ENCODE measurements at regions of chr17 and their contacts with region 1.

Region 1: DNA sequence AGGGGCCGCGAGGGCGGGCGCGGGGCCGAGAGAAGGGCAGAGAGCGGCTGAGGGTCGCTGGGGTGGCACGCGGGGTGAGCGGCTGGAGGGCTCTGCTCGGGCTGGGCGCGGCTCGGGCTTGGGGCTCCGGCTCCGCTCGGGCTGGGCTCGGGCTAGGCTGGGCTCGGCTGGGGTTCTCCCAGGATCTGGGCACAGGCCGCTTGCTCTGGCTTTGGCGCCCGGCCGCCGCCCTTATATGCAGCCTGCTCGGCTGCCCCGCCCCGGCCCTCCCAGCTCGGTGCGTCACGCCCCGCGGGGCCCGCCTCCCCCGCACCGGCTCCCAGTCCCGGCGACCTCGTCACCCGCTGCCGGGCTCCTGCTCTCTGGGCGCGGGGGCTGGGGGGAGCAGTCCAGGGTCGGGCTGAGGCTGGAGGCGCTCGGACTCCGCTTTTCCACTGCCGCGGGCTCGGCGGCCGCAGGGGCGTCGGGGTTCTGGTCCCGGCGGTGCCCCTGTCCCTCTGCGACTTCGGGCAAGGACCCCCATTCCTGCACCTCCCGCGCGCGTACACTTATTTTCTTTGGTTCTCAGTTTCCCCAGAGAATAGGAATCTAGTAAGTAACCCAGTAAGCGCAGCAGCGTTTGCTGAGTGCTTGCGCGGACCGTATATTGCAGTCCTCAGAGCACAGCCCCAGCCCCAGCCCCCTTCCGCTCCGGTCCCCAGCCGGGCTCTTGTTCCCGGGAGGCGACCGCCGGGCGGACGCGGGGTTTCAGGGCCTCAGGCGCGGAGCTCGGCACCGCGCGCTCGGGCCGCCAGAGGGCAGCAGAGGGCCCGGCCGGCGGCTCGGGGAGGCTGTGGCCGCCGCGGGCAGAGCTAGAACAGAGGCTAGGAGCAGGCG is at the start of gene RASD1:
- DNase-seq: peak; percentile 85 to 88
- ATAC-seq: peak; percentile 83 to 90
- H3K4me3 ChIP-seq: peak within 1 kb of the TSS; percentile 63
- H3K27ac ChIP-seq: peak within 1 kb of the TSS; percentile 81 to 93
- H3K4me1 ChIP-seq: peaks cover 4% of the 10 kb centered on the region; the same call in 2 of the 3 replicates
- CTCF ChIP-seq: peak; percentile 98
- EP300 ChIP-seq: no peak
- POLR2A ChIP-seq: peak; percentile 76
- RAD21 ChIP-seq: peak; percentile 69 to 94
- polyA plus RNA-seq, gene RASD1: 0.99 and 1.4 TPM in 2 replicates

Region 2: DNA sequence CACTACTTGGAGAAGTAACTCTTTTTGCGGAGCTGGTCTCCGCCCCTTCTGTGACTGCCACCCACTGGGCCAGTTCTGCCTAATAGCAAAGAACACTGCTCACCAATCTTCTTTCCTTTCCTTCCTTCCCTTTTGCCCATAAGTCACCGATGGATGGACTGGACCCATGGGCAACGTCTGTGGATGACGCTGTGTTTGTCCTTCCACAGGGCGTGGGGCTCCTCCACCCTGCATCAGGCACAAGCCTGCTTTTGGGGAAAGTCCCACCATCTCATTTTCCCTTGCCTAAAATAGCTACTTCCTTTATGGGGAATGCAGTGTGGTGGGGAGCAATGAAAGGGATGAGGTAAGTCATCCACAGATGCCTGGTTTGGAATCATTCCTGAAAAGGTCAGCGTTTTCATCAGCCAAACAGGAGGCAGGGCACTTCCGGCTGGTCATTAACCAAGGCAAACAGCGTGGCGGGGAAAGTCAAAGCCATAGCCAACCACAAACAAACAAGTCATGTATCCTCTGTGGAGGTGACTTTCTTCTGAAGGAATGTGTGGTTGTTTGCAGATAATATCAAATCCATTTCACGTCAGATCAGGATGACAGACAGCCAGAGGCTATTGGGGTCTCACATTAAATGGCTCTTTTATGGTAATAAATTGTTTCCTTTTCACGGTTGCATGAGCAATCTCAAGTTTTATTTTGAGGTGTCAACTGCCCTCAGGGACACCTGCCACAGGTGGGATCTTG is 50.3 kb before region 1 on chr17:
- CTCF ChIA-PET with region 1: interaction called, 18 read pairs
- POLR2A ChIA-PET with region 1: interaction called, 11 read pairs
- DNase-seq: peak; percentile 98
- ATAC-seq: peak; percentile 86 to 88
- H3K4me3 ChIP-seq: peak overlapping the region; percentile 14; the same call in 1 of the 3 replicates
- H3K27ac ChIP-seq: peak overlapping the region; percentile 71 to 83
- H3K4me1 ChIP-seq: peaks cover 48% of the 10 kb centered on the region
- CTCF ChIP-seq: no peak
- EP300 ChIP-seq: peak; percentile 90 to 97; a peak in 4 of 5 replicates
- POLR2A ChIP-seq: no peak
- RAD21 ChIP-seq: peak; percentile 5 to 49; a peak in 3 of 5 replicates

Region 3: DNA sequence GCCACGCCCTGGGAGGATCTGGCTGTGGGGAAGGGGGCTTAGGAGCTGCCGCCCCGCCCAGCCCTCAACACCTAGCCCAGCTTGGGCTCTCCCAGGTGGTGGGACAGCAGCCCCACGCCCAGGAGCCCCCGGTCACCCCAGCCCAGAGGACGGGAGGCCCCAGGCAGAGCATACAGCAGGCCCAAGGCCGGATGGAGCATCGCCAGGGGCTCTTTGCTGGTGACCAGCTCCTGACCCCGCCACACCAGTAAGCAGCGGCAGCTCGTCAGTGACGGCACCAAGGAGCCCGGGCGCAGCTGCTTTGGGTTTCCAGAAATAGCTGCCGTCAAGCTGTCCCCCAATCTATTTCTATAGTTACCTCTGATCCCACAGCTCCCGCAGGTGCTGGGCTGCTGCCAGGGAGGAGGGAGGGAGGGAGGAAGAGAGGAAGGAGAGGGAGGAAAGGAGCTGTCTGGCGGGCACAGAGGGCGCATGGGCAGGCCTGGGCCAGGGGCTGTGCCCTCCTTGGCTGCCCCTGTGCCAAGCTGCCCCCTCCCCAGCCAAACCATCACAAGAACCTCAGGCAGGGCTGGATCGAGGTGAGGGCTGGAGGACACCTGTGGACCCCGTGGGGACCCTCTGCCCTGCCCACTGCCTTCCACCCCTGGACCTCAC is 10.5 kb after region 1 on chr17:
- CTCF ChIA-PET with region 1: interaction called, 102 read pairs
- POLR2A ChIA-PET with region 1: interaction called, 10 read pairs
- DNase-seq: no peak
- ATAC-seq: no peak
- H3K4me3 ChIP-seq: no peak overlapping the region
- H3K27ac ChIP-seq: no peak overlapping the region
- H3K4me1 ChIP-seq: peaks cover 11% of the 10 kb centered on the region
- CTCF ChIP-seq: no peak
- EP300 ChIP-seq: no peak
- POLR2A ChIP-seq: no peak
- RAD21 ChIP-seq: no peak

Region 4: GRCh38 chr17:17523001-17523730 is 26.7 kb after region 1 on chr17:
- CTCF ChIA-PET with region 1: interaction called, 27 read pairs
- POLR2A ChIA-PET with region 1: interaction called, 4 read pairs
- DNase-seq: no peak
- ATAC-seq: no peak
- H3K4me3 ChIP-seq: no peak overlapping the region
- H3K27ac ChIP-seq: peak overlapping the region in 1 of 2 experiments; percentile 9; a peak in 1 of 6 replicates
- H3K4me1 ChIP-seq: peaks cover 5% of the 10 kb centered on the region; the same call in 2 of the 3 replicates
- CTCF ChIP-seq: no peak
- EP300 ChIP-seq: no peak
- POLR2A ChIP-seq: no peak
- RAD21 ChIP-seq: no peak

Region 5: DNA sequence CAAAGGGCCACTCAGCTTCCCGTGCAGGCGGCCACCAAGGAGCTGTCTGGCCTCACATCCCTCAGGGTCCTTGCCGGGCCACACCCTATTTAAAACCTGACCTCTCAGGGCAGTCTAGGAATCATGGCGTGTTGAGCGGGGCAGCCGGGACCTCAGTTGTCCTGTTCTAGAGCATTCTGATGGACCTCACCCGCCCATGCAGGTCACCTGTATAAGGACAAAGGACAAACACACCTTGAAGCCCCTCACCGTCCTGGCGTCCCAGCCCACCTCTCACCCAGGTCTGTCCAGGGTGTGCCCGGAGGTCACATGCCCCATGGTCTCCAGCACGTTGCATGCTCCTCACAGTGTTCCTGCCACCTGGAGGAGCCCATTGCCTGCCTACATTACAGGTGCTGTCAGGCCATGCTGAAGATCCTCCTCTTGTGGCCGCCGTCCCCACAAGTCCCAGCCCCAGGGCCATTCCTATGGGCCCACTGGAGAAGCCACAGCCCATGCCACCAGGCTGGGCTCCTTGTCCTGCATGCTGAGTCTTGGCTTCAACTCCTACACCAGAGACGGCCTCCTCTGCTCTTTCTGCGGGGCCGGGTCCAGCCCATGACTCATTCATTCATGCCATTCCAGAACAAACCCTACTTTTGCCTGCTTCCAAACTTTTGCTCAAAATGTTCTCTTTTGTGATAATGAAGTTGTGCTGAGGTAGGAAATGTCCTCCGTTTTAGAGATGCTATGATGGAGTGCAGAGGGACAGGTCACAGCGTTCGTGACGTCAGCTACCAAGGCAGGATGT is 48.8 kb after region 1 on chr17:
- CTCF ChIA-PET with region 1: interaction called, 40 read pairs
- POLR2A ChIA-PET with region 1: interaction called, 3 read pairs
- DNase-seq: no peak
- ATAC-seq: no peak
- H3K4me3 ChIP-seq: no peak overlapping the region
- H3K27ac ChIP-seq: no peak overlapping the region; a peak in 1 of 6 replicates
- H3K4me1 ChIP-seq: no peaks in the 10 kb centered on the region; the same call in 2 of the 3 replicates
- CTCF ChIP-seq: no peak
- EP300 ChIP-seq: no peak
- POLR2A ChIP-seq: no peak
- RAD21 ChIP-seq: no peak

Region 6: GRCh38 chr17:17575360-17576251 is 79.2 kb after region 1 on chr17:
- CTCF ChIA-PET with region 1: interaction called, 254 read pairs
- POLR2A ChIA-PET with region 1: no interaction called
- DNase-seq: no peak
- ATAC-seq: no peak
- H3K4me3 ChIP-seq: no peak overlapping the region
- H3K27ac ChIP-seq: no peak overlapping the region
- H3K4me1 ChIP-seq: peaks cover 2% of the 10 kb centered on the region
- CTCF ChIP-seq: no peak
- EP300 ChIP-seq: no peak
- POLR2A ChIP-seq: no peak
- RAD21 ChIP-seq: no peak

Region 7: GRCh38 chr17:17641621-17642409 is 145.4 kb after region 1 on chr17:
- CTCF ChIA-PET with region 1: interaction called, 43 read pairs
- POLR2A ChIA-PET with region 1: no interaction called
- DNase-seq: peak; percentile 70 to 85
- ATAC-seq: peak; percentile 85 to 96
- H3K4me3 ChIP-seq: no peak overlapping the region
- H3K27ac ChIP-seq: no peak overlapping the region
- H3K4me1 ChIP-seq: no peaks in the 10 kb centered on the region
- CTCF ChIP-seq: peak; percentile 97
- EP300 ChIP-seq: no peak
- POLR2A ChIP-seq: no peak
- RAD21 ChIP-seq: peak; percentile 97 to 99

Region 8: GRCh38 chr17:17985555-17985954 is 489.1 kb after region 1 on chr17:
- CTCF ChIA-PET with region 1: no interaction called
- POLR2A ChIA-PET with region 1: no interaction called
- DNase-seq: peak in 1 of 2 experiments; percentile 29
- ATAC-seq: peak in 1 of 2 experiments; percentile 48; a peak in 2 of 6 replicates
- H3K4me3 ChIP-seq: no peak overlapping the region
- H3K27ac ChIP-seq: peak overlapping the region in 1 of 2 experiments; percentile 33; a peak in 3 of 6 replicates
- H3K4me1 ChIP-seq: peaks cover 15% of the 10 kb centered on the region
- CTCF ChIP-seq: peak; percentile 28; the same call in 2 of the 3 replicates
- EP300 ChIP-seq: no peak
- POLR2A ChIP-seq: no peak
- RAD21 ChIP-seq: peak; percentile 28 to 65; a peak in 3 of 5 replicates

Measured in A549 (cell line).